Activated CD4-positive, alpha-beta T cell treated with anti-CD3 and anti-CD28 coated beads for 36 hours (primary cell): ENCODE measurements at regions of chr12 and their contacts with region 1.

Region 1: DNA sequence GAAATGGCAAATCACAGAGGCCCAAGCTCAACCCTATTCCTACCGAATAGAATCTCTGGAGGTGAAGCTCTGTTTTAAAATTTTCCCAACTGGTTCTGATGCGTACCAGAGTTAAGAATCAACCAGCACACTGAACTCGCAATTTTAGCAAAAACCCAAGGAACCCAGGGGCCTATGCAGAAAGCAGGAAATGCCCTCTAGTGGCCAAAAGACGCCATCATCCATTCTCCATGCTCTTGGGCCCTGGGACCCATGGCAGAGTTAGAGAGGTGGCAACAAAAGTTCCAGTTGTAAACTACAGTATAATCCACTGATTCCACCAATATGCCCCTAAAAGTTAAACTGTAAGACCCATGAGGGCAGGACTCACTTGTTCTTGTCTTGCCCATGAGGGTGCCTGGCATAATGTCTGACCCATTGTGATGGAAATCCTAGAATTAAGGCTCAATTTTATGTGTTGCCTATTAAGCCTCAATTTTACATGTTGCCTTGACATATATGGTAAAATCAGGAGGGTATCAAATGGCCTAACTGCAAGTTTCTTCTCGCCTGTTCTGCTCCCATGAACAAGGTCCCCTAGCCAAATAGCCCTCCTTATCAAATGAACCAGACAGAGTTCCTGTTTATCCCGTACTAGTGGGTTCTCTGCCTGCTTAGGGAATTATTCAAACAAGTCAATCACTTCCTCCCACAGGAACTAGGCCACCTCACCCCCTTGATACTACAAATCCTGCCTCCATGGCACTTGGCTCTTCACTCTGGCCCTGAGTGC is 137.5 kb upstream of the CPM start:
- DNase-seq: peak; percentile 80
- ATAC-seq: peak; percentile 79
- H3K4me3 Mint-ChIP-seq: no peak overlapping the region
- H3K27ac Mint-ChIP-seq: no peak overlapping the region
- H3K4me1 Mint-ChIP-seq: peaks cover 19% of the 10 kb centered on the region
- H3K27me3 Mint-ChIP-seq: peaks cover 14% of the 10 kb centered on the region

Region 2: DNA sequence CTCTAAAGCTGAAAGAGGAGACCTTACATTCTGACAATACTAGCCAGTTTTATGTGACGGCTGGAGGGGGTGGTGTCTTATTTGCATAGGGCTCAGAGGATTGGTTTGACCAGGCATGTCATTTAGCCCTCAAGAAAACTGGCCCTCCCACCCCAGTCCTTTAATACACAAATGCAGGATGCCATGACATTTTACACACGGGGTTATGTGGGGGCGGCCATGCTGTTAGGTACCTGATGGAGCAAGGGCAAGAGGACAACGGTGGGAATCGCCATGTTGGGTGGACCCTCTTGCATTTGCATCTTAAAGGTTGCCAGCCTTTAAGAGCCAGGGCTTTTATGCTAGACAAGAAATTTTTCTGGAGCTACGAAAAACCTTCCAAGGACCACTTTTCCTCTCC is 239.2 kb before region 1 on chr12:
- CTCF ChIA-PET with region 1: interaction called, 8 read pairs
- POLR2A ChIA-PET with region 1: no interaction called
- intact Hi-C with region 1: loop called in 1 of 2 experiments (anchors 1 kb)
- DNase-seq: no peak
- ATAC-seq: no peak
- H3K4me3 Mint-ChIP-seq: no peak overlapping the region
- H3K27ac Mint-ChIP-seq: no peak overlapping the region
- H3K4me1 Mint-ChIP-seq: peaks cover 19% of the 10 kb centered on the region
- H3K27me3 Mint-ChIP-seq: no peaks in the 10 kb centered on the region

Region 3: GRCh38 chr12:68871921-68872320 is 198.6 kb before region 1 on chr12:
- CTCF ChIA-PET with region 1: interaction called, 4 read pairs
- POLR2A ChIA-PET with region 1: no interaction called
- intact Hi-C with region 1: loop called (anchors 1 kb)
- DNase-seq: peak; percentile 55
- ATAC-seq: peak; percentile 42
- H3K4me3 Mint-ChIP-seq: no peak overlapping the region
- H3K27ac Mint-ChIP-seq: no peak overlapping the region
- H3K4me1 Mint-ChIP-seq: no peaks in the 10 kb centered on the region
- H3K27me3 Mint-ChIP-seq: peaks cover 2% of the 10 kb centered on the region

Region 4: GRCh38 chr12:69052613-69053408 is 17.7 kb before region 1 on chr12:
- CTCF ChIA-PET with region 1: interaction called, 4 read pairs
- POLR2A ChIA-PET with region 1: interaction called, 3 read pairs
- intact Hi-C with region 1: loop called in 1 of 2 experiments (anchors 2 kb)
- DNase-seq: peak; percentile 81
- ATAC-seq: peak; percentile 95
- H3K4me3 Mint-ChIP-seq: no peak overlapping the region
- H3K27ac Mint-ChIP-seq: peak overlapping the region; percentile 59
- H3K4me1 Mint-ChIP-seq: peaks cover 26% of the 10 kb centered on the region
- H3K27me3 Mint-ChIP-seq: peaks cover 20% of the 10 kb centered on the region

Region 5: GRCh38 chr12:69083689-69084088 is 13.2 kb after region 1 on chr12:
- CTCF ChIA-PET with region 1: no interaction called
- POLR2A ChIA-PET with region 1: no interaction called
- intact Hi-C with region 1: no loop called
- DNase-seq: no peak
- ATAC-seq: no peak
- H3K4me3 Mint-ChIP-seq: no peak overlapping the region
- H3K27ac Mint-ChIP-seq: no peak overlapping the region
- H3K4me1 Mint-ChIP-seq: no peaks in the 10 kb centered on the region
- H3K27me3 Mint-ChIP-seq: peaks cover 8% of the 10 kb centered on the region